CD8-positive, alpha-beta T cell (primary cell): ENCODE measurements at regions of chr6 and their contacts with region 1.

Region 1: GRCh38 chr6:125764121-125764671 is 14.8 kb downstream of the HEY2 start:
- DNase-seq: no peak
- ATAC-seq: no peak
- H3K4me3 ChIP-seq: no peak overlapping the region
- H3K4me3 Mint-ChIP-seq: no peak overlapping the region
- H3K27ac ChIP-seq: no peak overlapping the region
- H3K27ac Mint-ChIP-seq: no peak overlapping the region
- H3K4me1 ChIP-seq: no peaks in the 10 kb centered on the region
- H3K4me1 Mint-ChIP-seq: peaks cover 1% of the 10 kb centered on the region
- H3K27me3 ChIP-seq: peaks cover 0 to 4% of the 10 kb centered on the region in 2 experiments
- H3K27me3 Mint-ChIP-seq: peaks cover 39% of the 10 kb centered on the region
- CTCF ChIP-seq: no peak

Region 2: GRCh38 chr6:123802697-123803496 is 1961.3 kb before region 1 on chr6:
- CTCF ChIA-PET with region 1: no interaction called
- POLR2A ChIA-PET with region 1: no interaction called
- intact Hi-C with region 1: loop called in 1 of 2 experiments (anchors 5 kb)
- DNase-seq: peak; percentile 8 to 54 (median 27)
- ATAC-seq: peak; percentile 42
- H3K4me3 ChIP-seq: no peak overlapping the region
- H3K4me3 Mint-ChIP-seq: peak overlapping the region; percentile 53
- H3K27ac ChIP-seq: no peak overlapping the region
- H3K27ac Mint-ChIP-seq: no peak overlapping the region
- H3K4me1 ChIP-seq: peaks cover 7% of the 10 kb centered on the region
- H3K4me1 Mint-ChIP-seq: peaks cover 13% of the 10 kb centered on the region
- H3K27me3 ChIP-seq: peaks cover 0 to 4% of the 10 kb centered on the region in 2 experiments
- H3K27me3 Mint-ChIP-seq: peaks cover 40% of the 10 kb centered on the region
- CTCF ChIP-seq: peak; percentile 28

Region 3: DNA sequence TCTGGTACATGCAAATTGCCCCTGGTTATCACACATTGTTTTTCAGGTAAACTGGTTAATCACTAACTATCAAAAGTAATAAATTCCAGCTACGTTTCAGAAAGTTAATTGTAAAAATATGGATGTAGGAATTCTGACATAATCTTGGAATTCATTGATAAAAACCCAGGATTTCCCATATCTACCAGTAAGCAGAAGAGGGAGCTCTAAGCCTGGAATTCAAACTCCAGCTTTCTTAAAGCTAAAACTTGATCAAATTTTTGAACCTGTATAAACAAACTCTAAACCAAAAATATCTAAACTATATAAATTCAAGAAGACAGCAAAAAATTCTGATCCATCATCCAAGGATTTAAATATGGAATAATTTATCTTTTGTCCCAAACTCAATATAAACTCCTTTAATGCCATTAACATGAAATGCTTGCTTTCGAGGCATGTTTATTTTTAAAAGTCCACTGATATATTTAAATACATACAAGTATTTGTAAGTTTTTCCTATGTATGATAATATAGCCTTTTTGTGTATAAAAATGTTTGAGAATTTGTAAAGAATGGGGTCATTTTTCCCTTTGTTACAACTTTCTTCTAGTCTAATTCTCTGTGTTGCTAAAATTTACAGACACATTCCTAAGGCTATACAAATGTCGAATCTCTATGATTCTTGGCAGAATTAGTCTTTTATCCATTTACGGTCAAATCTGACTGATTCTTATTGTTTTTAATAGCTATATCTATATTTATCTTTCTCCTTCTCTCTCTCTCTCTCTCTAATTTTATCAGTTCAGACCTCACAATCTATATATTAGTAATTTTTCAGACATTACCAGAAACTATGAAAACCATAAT is 893.4 kb before region 1 on chr6:
- CTCF ChIA-PET with region 1: no interaction called
- POLR2A ChIA-PET with region 1: no interaction called
- intact Hi-C with region 1: loop called in 1 of 2 experiments (anchors 10 kb)
- DNase-seq: peak in 1 of 9 experiments; percentile 14
- ATAC-seq: no peak
- H3K4me3 ChIP-seq: no peak overlapping the region
- H3K4me3 Mint-ChIP-seq: no peak overlapping the region
- H3K27ac ChIP-seq: no peak overlapping the region
- H3K27ac Mint-ChIP-seq: no peak overlapping the region
- H3K4me1 ChIP-seq: no peaks in the 10 kb centered on the region
- H3K4me1 Mint-ChIP-seq: no peaks in the 10 kb centered on the region
- H3K27me3 ChIP-seq: no peaks in the 10 kb centered on the region
- H3K27me3 Mint-ChIP-seq: no peaks in the 10 kb centered on the region
- CTCF ChIP-seq: no peak

Region 4: GRCh38 chr6:125191916-125192609 is 572.1 kb before region 1 on chr6:
- CTCF ChIA-PET with region 1: interaction called, 4 read pairs
- POLR2A ChIA-PET with region 1: no interaction called
- intact Hi-C with region 1: loop called (anchors 1 to 5 kb)
- DNase-seq: peak in 8 of 9 experiments; percentile 21 to 68 (median 48)
- ATAC-seq: peak; percentile 83
- H3K4me3 ChIP-seq: no peak overlapping the region
- H3K4me3 Mint-ChIP-seq: no peak overlapping the region
- H3K27ac ChIP-seq: no peak overlapping the region
- H3K27ac Mint-ChIP-seq: no peak overlapping the region
- H3K4me1 ChIP-seq: no peaks in the 10 kb centered on the region
- H3K4me1 Mint-ChIP-seq: peaks cover 3% of the 10 kb centered on the region
- H3K27me3 ChIP-seq: no peaks in the 10 kb centered on the region
- H3K27me3 Mint-ChIP-seq: peaks cover 6% of the 10 kb centered on the region
- CTCF ChIP-seq: peak; percentile 72

Region 5: DNA sequence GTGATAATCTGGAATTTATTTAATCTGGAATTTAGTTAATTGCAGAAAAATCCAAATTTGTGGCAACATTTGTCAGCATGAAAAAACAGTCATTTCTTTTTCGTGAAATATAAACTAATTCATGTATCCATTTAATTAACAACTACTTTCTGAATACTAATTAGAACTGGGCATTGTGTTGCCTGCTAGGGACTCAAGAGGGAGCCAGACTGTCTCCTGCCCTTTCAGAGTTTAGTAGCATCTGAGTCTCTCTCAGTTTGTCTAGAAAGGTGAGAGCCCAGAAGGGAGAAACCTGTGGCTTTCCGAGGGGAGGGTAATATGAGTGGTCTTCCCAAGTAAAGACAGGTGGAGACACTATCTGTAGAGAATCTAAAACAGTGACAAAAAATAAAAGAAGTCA is 251.6 kb before region 1 on chr6:
- CTCF ChIA-PET with region 1: no interaction called
- POLR2A ChIA-PET with region 1: no interaction called
- intact Hi-C with region 1: no loop called
- DNase-seq: peak in 2 of 9 experiments; percentile 3 to 8
- ATAC-seq: no peak
- H3K4me3 ChIP-seq: no peak overlapping the region
- H3K4me3 Mint-ChIP-seq: no peak overlapping the region
- H3K27ac ChIP-seq: no peak overlapping the region
- H3K27ac Mint-ChIP-seq: no peak overlapping the region
- H3K4me1 ChIP-seq: no peaks in the 10 kb centered on the region
- H3K4me1 Mint-ChIP-seq: no peaks in the 10 kb centered on the region
- H3K27me3 ChIP-seq: no peaks in the 10 kb centered on the region
- H3K27me3 Mint-ChIP-seq: peaks cover 5% of the 10 kb centered on the region
- CTCF ChIP-seq: no peak